Naive thymus-derived CD4-positive, alpha-beta T cell (primary cell): ENCODE measurements at regions of chr15 and their contacts with region 1.

Region 1: GRCh38 chr15:60478566-60479360 is at the start of gene ICE2:
- DNase-seq: peak; percentile 89 to 96 (median 94)
- ATAC-seq: peak; percentile 97
- H3K4me3 ChIP-seq: peak within 1 kb of the TSS; percentile 83
- H3K4me3 Mint-ChIP-seq: peak within 1 kb of the TSS; percentile 93 to 100 (median 98)
- H3K27ac ChIP-seq: peak within 1 kb of the TSS; percentile 93
- H3K27ac Mint-ChIP-seq: peak within 1 kb of the TSS; percentile 98 to 100 (median 99)
- H3K4me1 ChIP-seq: peaks cover 23 to 25% of the 10 kb centered on the region in 2 donors
- H3K4me1 Mint-ChIP-seq: peaks cover 43 to 86% (median 70%) of the 10 kb centered on the region in 7 donors
- H3K27me3 ChIP-seq: no peaks in the 10 kb centered on the region
- H3K27me3 Mint-ChIP-seq: no peaks in the 10 kb centered on the region
- total RNA-seq, gene ICE2: 44.8 to 70.9 (median 68.0) TPM

Region 2: GRCh38 chr15:58987489-58988005 is 1491.2 kb before region 1 on chr15 and contains the start of gene RNF111:
- CTCF ChIA-PET with region 1: no interaction called
- POLR2A ChIA-PET with region 1: no interaction called
- intact Hi-C with region 1: loop called in 1 of 2 experiments (anchors 2 kb)
- DNase-seq: peak; percentile 66 to 94 (median 90)
- ATAC-seq: peak; percentile 98
- H3K4me3 ChIP-seq: peak within 1 kb of the TSS; percentile 83
- H3K4me3 Mint-ChIP-seq: peak within 1 kb of the TSS; percentile 89 to 100 (median 96)
- H3K27ac ChIP-seq: peak within 1 kb of the TSS; percentile 91
- H3K27ac Mint-ChIP-seq: peak within 1 kb of the TSS; percentile 87 to 96 (median 94)
- H3K4me1 ChIP-seq: peaks cover 17 to 25% of the 10 kb centered on the region in 2 donors
- H3K4me1 Mint-ChIP-seq: peaks cover 33 to 56% (median 53%) of the 10 kb centered on the region in 7 donors
- H3K27me3 ChIP-seq: no peaks in the 10 kb centered on the region
- H3K27me3 Mint-ChIP-seq: peaks cover 0 to 13% (median 0%) of the 10 kb centered on the region in 5 donors
- total RNA-seq, gene RNF111: 50.8 to 61.1 (median 57.9) TPM

Region 3: GRCh38 chr15:60362321-60363086 is 116.3 kb before region 1 on chr15:
- CTCF ChIA-PET with region 1: no interaction called
- POLR2A ChIA-PET with region 1: no interaction called
- intact Hi-C with region 1: loop called in 1 of 2 experiments (anchors 1 kb)
- DNase-seq: peak in 1 of 9 donors; percentile 46
- ATAC-seq: peak; percentile 31
- H3K4me3 ChIP-seq: no peak overlapping the region
- H3K4me3 Mint-ChIP-seq: peak overlapping the region in 1 of 10 donors; percentile 54
- H3K27ac ChIP-seq: no peak overlapping the region
- H3K27ac Mint-ChIP-seq: peak overlapping the region in 3 of 9 donors; percentile 47 to 81 (median 78)
- H3K4me1 ChIP-seq: peaks cover 0 to 7% of the 10 kb centered on the region in 2 donors
- H3K4me1 Mint-ChIP-seq: peaks cover 6 to 39% (median 12%) of the 10 kb centered on the region in 7 donors
- H3K27me3 ChIP-seq: no peaks in the 10 kb centered on the region
- H3K27me3 Mint-ChIP-seq: no peaks in the 10 kb centered on the region

Region 4: DNA sequence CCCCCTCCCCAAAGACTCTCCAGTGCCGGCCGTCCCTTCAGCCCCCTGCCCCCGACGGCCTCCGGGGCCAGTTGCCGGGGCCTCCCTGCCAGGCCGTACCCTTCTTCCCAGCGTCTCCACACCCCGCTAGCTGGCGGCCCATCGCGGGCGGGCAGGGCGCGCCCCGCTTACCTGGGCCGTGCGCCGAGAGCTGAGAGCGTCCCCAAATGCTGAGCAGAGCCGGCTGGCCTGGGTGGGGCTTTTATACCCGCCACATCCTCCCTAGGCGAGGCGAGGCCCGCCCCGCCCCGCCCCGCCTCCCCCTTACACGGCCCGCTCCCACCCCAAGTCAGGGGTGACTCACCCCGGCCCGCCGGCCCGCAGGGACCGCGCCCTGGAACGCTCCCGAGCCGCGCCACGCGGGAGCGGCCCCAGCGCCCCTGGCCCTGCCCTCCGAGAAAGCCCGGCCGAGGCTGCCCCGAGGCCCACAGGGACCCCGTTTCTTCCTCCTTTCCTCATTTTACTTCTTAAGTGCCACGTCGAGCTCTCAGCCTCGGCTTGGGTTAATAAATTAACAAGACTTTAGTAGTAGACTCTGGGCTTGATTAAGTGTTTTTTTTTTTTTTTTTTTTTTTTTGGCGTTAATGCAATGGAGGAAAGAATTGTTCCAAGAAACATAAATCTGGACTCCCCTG is 80.9 kb before region 1 on chr15 and contains the start of gene ANXA2:
- CTCF ChIA-PET with region 1: interaction called, 3 read pairs
- POLR2A ChIA-PET with region 1: interaction called, 5 read pairs
- intact Hi-C with region 1: loop called (anchors 1 kb)
- DNase-seq: peak; percentile 49 to 85 (median 62)
- ATAC-seq: peak; percentile 81
- H3K4me3 ChIP-seq: peak within 1 kb of the TSS; percentile 72
- H3K4me3 Mint-ChIP-seq: peak within 1 kb of the TSS; percentile 83 to 98 (median 87)
- H3K27ac ChIP-seq: peak within 1 kb of the TSS; percentile 61
- H3K27ac Mint-ChIP-seq: peak within 1 kb of the TSS; percentile 87 to 98 (median 95)
- H3K4me1 ChIP-seq: peaks cover 6 to 32% of the 10 kb centered on the region in 2 donors
- H3K4me1 Mint-ChIP-seq: peaks cover 10 to 67% (median 33%) of the 10 kb centered on the region in 7 donors
- H3K27me3 ChIP-seq: no peaks in the 10 kb centered on the region
- H3K27me3 Mint-ChIP-seq: peaks cover 0 to 7% (median 0%) of the 10 kb centered on the region in 5 donors
- total RNA-seq, gene ANXA2: 28.8 to 377 (median 42.4) TPM

Region 5: GRCh38 chr15:60494108-60494507 is 15.3 kb after region 1 on chr15:
- CTCF ChIA-PET with region 1: no interaction called
- POLR2A ChIA-PET with region 1: interaction called, 11 read pairs
- intact Hi-C with region 1: loop called in 1 of 2 experiments (anchors 2 kb)
- DNase-seq: no peak
- ATAC-seq: no peak
- H3K4me3 ChIP-seq: no peak overlapping the region
- H3K4me3 Mint-ChIP-seq: no peak overlapping the region
- H3K27ac ChIP-seq: no peak overlapping the region
- H3K27ac Mint-ChIP-seq: peak overlapping the region in 5 of 9 donors; percentile 5 to 75 (median 59)
- H3K4me1 ChIP-seq: no peaks in the 10 kb centered on the region
- H3K4me1 Mint-ChIP-seq: peaks cover 0 to 39% (median 18%) of the 10 kb centered on the region in 7 donors
- H3K27me3 ChIP-seq: no peaks in the 10 kb centered on the region
- H3K27me3 Mint-ChIP-seq: no peaks in the 10 kb centered on the region

Region 6: GRCh38 chr15:60548101-60548500 is 69.3 kb after region 1 on chr15:
- CTCF ChIA-PET with region 1: interaction called, 3 read pairs
- POLR2A ChIA-PET with region 1: no interaction called
- intact Hi-C with region 1: loop called in 1 of 2 experiments (anchors 1 kb)
- DNase-seq: peak in 8 of 9 donors; percentile 26 to 64 (median 40)
- ATAC-seq: peak; percentile 69
- H3K4me3 ChIP-seq: peak overlapping the region; percentile 6
- H3K4me3 Mint-ChIP-seq: peak overlapping the region; percentile 53 to 84 (median 70)
- H3K27ac ChIP-seq: peak overlapping the region; percentile 28
- H3K27ac Mint-ChIP-seq: peak overlapping the region; percentile 77 to 96 (median 88)
- H3K4me1 ChIP-seq: peaks cover 47 to 69% of the 10 kb centered on the region in 2 donors
- H3K4me1 Mint-ChIP-seq: peaks cover 63 to 96% (median 93%) of the 10 kb centered on the region in 7 donors
- H3K27me3 ChIP-seq: no peaks in the 10 kb centered on the region
- H3K27me3 Mint-ChIP-seq: no peaks in the 10 kb centered on the region

Region 7: DNA sequence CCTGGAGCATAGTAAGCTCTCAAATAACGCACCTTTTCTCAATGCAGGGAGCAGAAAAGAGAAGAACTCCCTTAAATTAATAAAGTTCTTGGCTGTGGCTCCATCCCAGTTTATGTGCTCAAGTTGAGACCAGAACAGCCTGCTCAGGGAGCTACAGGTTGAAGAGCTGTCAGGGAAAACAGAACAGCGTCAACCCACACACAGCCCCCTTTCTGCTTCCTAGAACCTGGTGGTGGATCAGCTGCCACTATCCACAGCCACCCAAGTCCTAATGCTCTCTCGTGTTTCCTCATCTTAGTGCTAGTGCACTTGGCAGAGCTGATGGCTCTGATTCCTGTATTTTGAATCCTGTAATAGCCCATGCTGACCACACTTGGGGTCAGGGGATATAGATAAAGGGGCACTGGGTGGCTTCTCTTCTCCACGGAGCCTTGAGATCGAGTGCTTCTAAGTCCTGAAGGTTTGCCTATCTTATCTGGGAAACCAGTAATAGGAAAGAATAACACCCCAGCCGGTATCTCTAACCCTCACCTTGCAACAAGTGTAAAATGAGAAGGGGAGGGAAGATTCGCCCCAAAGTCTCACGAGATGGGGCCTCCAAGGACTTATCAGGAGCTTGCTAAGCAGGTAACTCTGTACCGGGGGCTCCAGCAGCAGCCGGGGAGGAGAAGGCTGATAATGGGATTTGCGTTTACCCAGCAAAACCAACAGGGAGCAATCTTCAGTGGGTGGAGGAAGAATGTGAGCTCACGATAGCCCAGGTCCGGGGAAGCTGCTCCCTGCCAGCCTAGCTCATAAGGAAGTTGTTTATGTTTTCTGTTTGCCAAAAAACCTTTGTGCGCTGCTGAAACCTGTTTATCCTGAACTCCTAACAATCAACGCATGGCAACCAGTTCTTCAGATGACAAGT is 136.4 kb after region 1 on chr15:
- CTCF ChIA-PET with region 1: no interaction called
- POLR2A ChIA-PET with region 1: no interaction called
- intact Hi-C with region 1: no loop called
- DNase-seq: no peak
- ATAC-seq: no peak
- H3K4me3 ChIP-seq: no peak overlapping the region
- H3K4me3 Mint-ChIP-seq: no peak overlapping the region
- H3K27ac ChIP-seq: no peak overlapping the region
- H3K27ac Mint-ChIP-seq: no peak overlapping the region
- H3K4me1 ChIP-seq: no peaks in the 10 kb centered on the region
- H3K4me1 Mint-ChIP-seq: peaks cover 5 to 15% (median 12%) of the 10 kb centered on the region in 7 donors
- H3K27me3 ChIP-seq: no peaks in the 10 kb centered on the region
- H3K27me3 Mint-ChIP-seq: peaks cover 4 to 33% (median 19%) of the 10 kb centered on the region in 5 donors

Region 8: GRCh38 chr15:60745469-60746061 is 266.8 kb after region 1 on chr15:
- CTCF ChIA-PET with region 1: no interaction called
- POLR2A ChIA-PET with region 1: no interaction called
- intact Hi-C with region 1: no loop called
- DNase-seq: no peak
- ATAC-seq: no peak
- H3K4me3 ChIP-seq: no peak overlapping the region
- H3K4me3 Mint-ChIP-seq: no peak overlapping the region
- H3K27ac ChIP-seq: no peak overlapping the region
- H3K27ac Mint-ChIP-seq: no peak overlapping the region
- H3K4me1 ChIP-seq: peaks cover 0 to 5% of the 10 kb centered on the region in 2 donors
- H3K4me1 Mint-ChIP-seq: peaks cover 0 to 8% (median 5%) of the 10 kb centered on the region in 7 donors
- H3K27me3 ChIP-seq: no peaks in the 10 kb centered on the region
- H3K27me3 Mint-ChIP-seq: no peaks in the 10 kb centered on the region

Region 9: DNA sequence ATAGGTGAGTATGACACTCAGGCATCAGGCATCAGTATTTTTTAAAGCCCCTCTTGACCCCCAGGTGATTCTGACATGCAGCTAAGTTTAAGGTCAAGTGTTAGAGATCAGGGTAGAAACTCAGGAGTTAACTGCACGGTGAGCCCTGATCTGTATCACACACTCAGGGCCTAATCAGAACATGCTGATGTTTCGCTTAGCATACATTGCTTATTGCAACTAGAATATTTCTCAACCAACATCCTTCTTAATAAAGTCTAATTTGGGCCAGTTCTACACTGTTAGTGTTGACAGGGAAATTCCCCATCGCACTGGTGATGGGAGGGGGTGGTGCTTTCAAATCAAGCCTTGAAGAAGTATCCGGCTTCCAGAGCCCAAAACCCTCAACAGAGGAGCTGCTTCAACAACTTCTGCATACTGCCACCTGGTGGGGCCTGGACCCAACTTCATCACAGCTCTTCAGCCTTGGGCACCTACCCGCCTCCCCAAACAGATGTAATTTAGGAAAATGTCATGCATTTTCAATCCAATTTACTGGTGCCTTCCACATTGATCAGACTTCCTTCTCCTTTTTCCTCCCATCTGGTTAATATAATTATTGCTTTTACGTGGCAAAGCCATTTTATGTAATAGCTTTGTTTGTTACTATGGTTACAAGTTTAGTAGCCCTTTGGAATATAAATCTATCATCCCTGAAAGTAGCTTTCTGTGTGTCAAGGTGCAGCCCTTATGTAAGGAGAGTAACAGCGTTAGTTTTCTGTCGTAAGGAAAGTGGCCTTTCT is 438.1 kb after region 1 on chr15:
- CTCF ChIA-PET with region 1: no interaction called
- POLR2A ChIA-PET with region 1: no interaction called
- intact Hi-C with region 1: loop called in 1 of 2 experiments (anchors 1 kb)
- DNase-seq: peak; percentile 59 to 89 (median 82)
- ATAC-seq: peak; percentile 99
- H3K4me3 ChIP-seq: no peak overlapping the region
- H3K4me3 Mint-ChIP-seq: peak overlapping the region in 1 of 10 donors; percentile 23
- H3K27ac ChIP-seq: no peak overlapping the region
- H3K27ac Mint-ChIP-seq: peak overlapping the region in 7 of 9 donors; percentile 12 to 79 (median 69)
- H3K4me1 ChIP-seq: peaks cover 5 to 6% of the 10 kb centered on the region in 2 donors
- H3K4me1 Mint-ChIP-seq: peaks cover 7 to 21% (median 10%) of the 10 kb centered on the region in 7 donors
- H3K27me3 ChIP-seq: no peaks in the 10 kb centered on the region
- H3K27me3 Mint-ChIP-seq: peaks cover 0 to 3% (median 0%) of the 10 kb centered on the region in 5 donors